ENCODE measurements at regions of chr6 and their contacts with region 1.

Region 1: GRCh38 chr6:32617751-32618150 is 19.5 kb upstream of the HLA-DQA1 start:
- DNase-seq: no peak
- ATAC-seq: no peak
- H3K4me3 ChIP-seq: no peak overlapping the region
- H3K27ac ChIP-seq: no peak overlapping the region
- H3K4me1 ChIP-seq: peaks cover 0 to 6% (median 0%) of the 10 kb centered on the region in 12 donors
- H3K27me3 ChIP-seq: no peaks in the 10 kb centered on the region
- CTCF ChIP-seq: no peak
- POLR2A ChIP-seq: no peak

Region 2: GRCh38 chr6:32439602-32440214 is 178.0 kb before region 1 on chr6 and contains the start of gene HLA-DRA:
- intact Hi-C with region 1: loop called in 1 of 10 experiments (anchors 2 kb)
- DNase-seq: peak in 2 of 5 donors; percentile 26 to 55
- ATAC-seq: peak; percentile 75 to 90 (median 84)
- H3K4me3 ChIP-seq: peak within 1 kb of the TSS; percentile 9 to 68 (median 56)
- H3K27ac ChIP-seq: peak within 1 kb of the TSS in 11 of 12 donors; percentile 2 to 94 (median 79)
- H3K4me1 ChIP-seq: peaks cover 0 to 46% (median 0%) of the 10 kb centered on the region in 12 donors
- H3K27me3 ChIP-seq: peaks cover 0 to 2% (median 0%) of the 10 kb centered on the region in 9 donors
- CTCF ChIP-seq: no peak
- POLR2A ChIP-seq: peak in 1 of 2 donors; percentile 24
- total RNA-seq, gene HLA-DRA: 20.0 to 1,108 (median 87.0) TPM

Region 3: DNA sequence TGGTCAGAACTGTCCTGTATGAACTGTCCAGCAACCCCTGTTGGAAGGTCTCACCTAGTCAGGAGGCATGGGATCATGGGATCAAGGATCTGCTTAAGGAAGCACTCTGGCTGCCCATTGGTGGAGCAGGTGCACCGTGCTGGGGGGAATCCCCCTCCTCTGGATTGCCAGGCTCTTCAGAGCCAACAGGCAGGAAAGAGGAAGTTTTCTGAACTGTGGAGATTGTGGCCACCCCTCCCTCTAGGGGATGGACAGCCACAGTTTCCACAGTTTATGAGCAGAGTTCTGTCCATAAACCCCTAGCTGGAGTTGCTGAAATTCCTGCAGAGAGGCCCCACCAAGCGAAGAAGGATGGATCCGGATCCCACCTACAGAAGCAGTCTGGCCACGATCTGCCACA is 61.7 kb after region 1 on chr6:
- intact Hi-C with region 1: no loop called
- DNase-seq: no peak
- ATAC-seq: no peak
- H3K4me3 ChIP-seq: no peak overlapping the region
- H3K27ac ChIP-seq: no peak overlapping the region
- H3K4me1 ChIP-seq: no peaks in the 10 kb centered on the region
- H3K27me3 ChIP-seq: peaks cover 0 to 11% (median 0%) of the 10 kb centered on the region in 9 donors
- CTCF ChIP-seq: no peak
- POLR2A ChIP-seq: no peak